ENCODE measurements at regions of chr1 and their contacts with region 1.

Region 1: DNA sequence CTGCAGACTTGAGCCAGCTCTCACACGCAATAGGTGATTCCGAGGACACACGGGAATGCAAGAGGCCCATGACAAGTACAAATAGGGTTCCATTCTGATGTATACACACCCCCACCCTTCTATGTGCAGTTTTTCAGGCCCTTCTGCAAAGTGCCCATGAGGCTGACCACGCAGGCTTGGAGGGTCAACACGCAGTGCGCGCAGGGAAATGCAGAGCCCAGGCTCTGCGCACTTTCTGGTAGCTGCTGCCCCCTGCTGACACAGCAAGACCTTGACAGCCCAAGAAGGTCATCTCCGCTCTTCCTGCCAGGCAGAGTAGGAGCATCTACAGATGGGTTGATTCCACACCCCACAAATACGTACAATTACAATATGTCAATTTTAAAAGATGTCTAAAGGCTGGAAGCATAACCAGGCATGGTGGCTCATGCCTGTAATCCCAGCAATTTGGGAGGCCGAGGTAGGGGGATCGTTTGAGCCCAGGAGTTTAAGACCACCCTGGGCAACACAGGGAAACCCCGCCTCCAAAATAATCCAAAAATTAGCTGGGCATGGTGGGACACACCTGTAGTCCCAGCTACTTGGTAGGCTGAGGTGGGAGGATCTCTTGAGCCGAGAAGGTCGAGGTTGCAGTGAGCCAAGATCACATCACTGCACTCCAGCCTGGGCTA is 18.5 kb downstream of the SH3BP5L start:
- DNase-seq: no peak
- ATAC-seq: peak; percentile 79
- H3K4me3 ChIP-seq: no peak overlapping the region
- H3K27ac ChIP-seq: no peak overlapping the region
- H3K4me1 ChIP-seq: peaks cover 24% of the 10 kb centered on the region
- H3K27me3 ChIP-seq: no peaks in the 10 kb centered on the region
- CTCF ChIP-seq: peak; percentile 91 to 96 (median 95)
- EP300 ChIP-seq: no peak
- POLR2A ChIP-seq: 0 out of 2 replicates have a peak, but pooled peaks have one; percentile 23
- RAD21 ChIP-seq: peak; percentile 99

Region 2: GRCh38 chr1:248243204-248243603 is 564.0 kb before region 1 on chr1:
- CTCF ChIA-PET with region 1: interaction called, 73 read pairs
- POLR2A ChIA-PET with region 1: interaction called, 3 read pairs
- RAD21 ChIA-PET with region 1: interaction called, 56 read pairs
- SMC1A ChIA-PET with region 1: interaction called, 73 read pairs
- in situ Hi-C with region 1: loop called (anchors 5 kb)
- intact Hi-C with region 1: loop called (anchors 1 kb)
- DNase-seq: peak; percentile 17
- ATAC-seq: peak; percentile 93
- H3K4me3 ChIP-seq: no peak overlapping the region
- H3K27ac ChIP-seq: no peak overlapping the region
- H3K4me1 ChIP-seq: no peaks in the 10 kb centered on the region
- H3K27me3 ChIP-seq: no peaks in the 10 kb centered on the region
- CTCF ChIP-seq: peak; percentile 75 to 83 (median 79)
- EP300 ChIP-seq: no peak
- POLR2A ChIP-seq: no peak
- RAD21 ChIP-seq: peak; percentile 87

Region 3: GRCh38 chr1:248686815-248687214 is 120.4 kb before region 1 on chr1:
- CTCF ChIA-PET with region 1: interaction called, 52 read pairs
- POLR2A ChIA-PET with region 1: interaction called, 6 read pairs
- RAD21 ChIA-PET with region 1: interaction called, 72 read pairs
- SMC1A ChIA-PET with region 1: interaction called, 50 read pairs
- in situ Hi-C with region 1: no loop called
- intact Hi-C with region 1: loop called (anchors 2 kb)
- DNase-seq: peak; percentile 43
- ATAC-seq: peak; percentile 78
- H3K4me3 ChIP-seq: no peak overlapping the region
- H3K27ac ChIP-seq: no peak overlapping the region; the same call in 1 of the 2 replicates
- H3K4me1 ChIP-seq: peaks cover 3% of the 10 kb centered on the region; the same call in 1 of the 2 replicates
- H3K27me3 ChIP-seq: no peaks in the 10 kb centered on the region
- CTCF ChIP-seq: peak; percentile 45 to 70 (median 70); a peak in 5 of 6 replicates
- EP300 ChIP-seq: no peak
- POLR2A ChIP-seq: no peak
- RAD21 ChIP-seq: peak; percentile 95

Region 4: GRCh38 chr1:248739572-248740205 is 67.5 kb before region 1 on chr1:
- CTCF ChIA-PET with region 1: interaction called, 6 read pairs
- POLR2A ChIA-PET with region 1: no interaction called
- RAD21 ChIA-PET with region 1: interaction called, 3 read pairs
- SMC1A ChIA-PET with region 1: interaction called, 10 read pairs
- in situ Hi-C with region 1: no loop called
- intact Hi-C with region 1: no loop called
- DNase-seq: no peak
- ATAC-seq: no peak
- H3K4me3 ChIP-seq: no peak overlapping the region
- H3K27ac ChIP-seq: no peak overlapping the region
- H3K4me1 ChIP-seq: no peaks in the 10 kb centered on the region
- H3K27me3 ChIP-seq: no peaks in the 10 kb centered on the region
- CTCF ChIP-seq: no peak
- EP300 ChIP-seq: no peak
- POLR2A ChIP-seq: no peak
- RAD21 ChIP-seq: no peak

Region 5: GRCh38 chr1:248821101-248821500 is 13.9 kb after region 1 on chr1:
- CTCF ChIA-PET with region 1: interaction called, 15 read pairs
- POLR2A ChIA-PET with region 1: interaction called, 10 read pairs
- RAD21 ChIA-PET with region 1: interaction called, 31 read pairs
- SMC1A ChIA-PET with region 1: interaction called, 36 read pairs
- in situ Hi-C with region 1: no loop called
- intact Hi-C with region 1: no loop called
- DNase-seq: no peak
- ATAC-seq: no peak
- H3K4me3 ChIP-seq: no peak overlapping the region
- H3K27ac ChIP-seq: no peak overlapping the region; the same call in 1 of the 2 replicates
- H3K4me1 ChIP-seq: peaks cover 22% of the 10 kb centered on the region
- H3K27me3 ChIP-seq: no peaks in the 10 kb centered on the region
- CTCF ChIP-seq: no peak
- EP300 ChIP-seq: no peak
- POLR2A ChIP-seq: no peak
- RAD21 ChIP-seq: no peak

Measured in GM12878 (cell line).